Activated CD8-positive, alpha-beta memory T cell treated with anti-CD3 and anti-CD28 coated beads, Interleukin-2, amount 10 ng/mL, durations not matched to agents 7 days and 5 days (primary cell): ENCODE measurements at regions of chr12 and their contacts with region 1.

Region 1: DNA sequence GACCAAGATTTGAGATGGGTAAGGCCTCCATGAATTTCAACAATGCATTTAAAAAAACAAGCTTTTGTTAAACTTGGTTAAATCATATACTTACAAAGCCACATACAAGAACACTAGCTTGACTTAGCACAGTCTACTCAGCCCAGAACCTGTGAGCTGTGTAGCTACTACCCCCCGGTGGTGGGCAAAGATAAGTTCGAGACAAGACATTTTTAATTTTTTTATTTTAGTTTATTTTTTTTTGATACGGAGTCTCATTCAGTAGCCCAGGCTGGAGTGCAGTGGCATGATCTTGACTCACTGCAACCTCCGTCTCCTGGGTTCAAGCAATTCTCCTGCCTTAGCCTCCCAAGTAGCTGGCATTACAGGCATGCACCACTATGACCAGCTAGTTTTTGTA is 3.7 kb upstream of the NECAP1 start:
- DNase-seq: peak; percentile 71
- ATAC-seq: no peak
- H3K4me3 Mint-ChIP-seq: no peak overlapping the region
- H3K27ac Mint-ChIP-seq: no peak overlapping the region
- H3K4me1 Mint-ChIP-seq: peaks cover 32% of the 10 kb centered on the region
- H3K27me3 Mint-ChIP-seq: no peaks in the 10 kb centered on the region

Region 2: DNA sequence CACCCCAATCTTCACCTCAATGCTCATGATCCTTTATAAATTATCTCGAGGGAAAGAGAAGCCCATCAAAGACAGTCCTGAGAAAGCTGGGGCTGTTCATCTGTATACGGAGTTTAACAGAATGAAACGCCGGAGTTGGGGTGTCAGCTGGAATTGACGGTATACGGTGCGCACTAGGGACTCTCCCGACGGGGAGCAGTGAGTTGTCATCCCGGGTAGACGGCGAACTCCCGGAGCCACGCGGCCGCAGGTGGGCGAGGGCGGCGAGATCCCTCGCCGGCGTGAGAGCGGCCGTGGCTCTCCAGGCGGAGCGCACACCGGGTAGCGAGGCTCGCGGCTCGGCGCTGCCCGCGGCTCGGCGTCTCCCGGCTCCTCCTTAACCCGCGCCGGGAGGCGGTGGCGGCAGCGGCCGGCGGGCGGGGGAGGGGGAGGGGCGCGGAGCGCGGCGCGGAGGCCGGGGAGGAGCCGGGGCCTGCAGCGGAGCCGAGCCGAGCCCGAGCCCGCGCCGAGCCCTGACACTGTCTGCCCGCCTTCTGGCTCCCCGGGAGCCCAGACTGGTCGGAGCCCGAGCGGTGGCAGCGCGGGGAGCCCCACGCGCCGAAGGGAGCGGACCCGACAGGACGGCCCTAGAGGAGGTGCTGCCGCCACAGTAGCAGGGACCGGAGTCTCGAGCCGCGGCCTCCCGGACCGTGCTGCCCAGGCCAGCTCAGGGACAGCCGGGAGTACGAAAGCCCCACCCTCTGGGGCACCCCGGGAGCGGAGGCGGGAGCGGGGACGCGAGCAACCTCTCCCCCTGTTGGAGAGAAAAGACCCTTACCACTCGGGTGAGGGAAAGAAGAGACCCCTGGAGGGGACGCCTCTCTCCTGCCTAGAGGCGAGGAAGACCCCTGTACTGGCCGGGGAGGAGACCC is 45.9 kb before region 1 on chr12 and contains the start of gene FOXJ2:
- CTCF ChIA-PET with region 1: interaction called, 16 read pairs
- DNase-seq: peak; percentile 81
- ATAC-seq: peak; percentile 91
- H3K4me3 Mint-ChIP-seq: peak within 1 kb of the TSS; percentile 83
- H3K27ac Mint-ChIP-seq: peak within 1 kb of the TSS; percentile 79
- H3K4me1 Mint-ChIP-seq: peaks cover 52% of the 10 kb centered on the region
- H3K27me3 Mint-ChIP-seq: no peaks in the 10 kb centered on the region
- total RNA-seq, gene FOXJ2: 17.9 to 18.1 TPM

Region 3: GRCh38 chr12:8038659-8039114 is 39.7 kb before region 1 on chr12:
- CTCF ChIA-PET with region 1: interaction called, 69 read pairs
- DNase-seq: peak; percentile 55
- ATAC-seq: peak; percentile 63
- H3K4me3 Mint-ChIP-seq: peak overlapping the region; percentile 25
- H3K27ac Mint-ChIP-seq: no peak overlapping the region
- H3K4me1 Mint-ChIP-seq: peaks cover 55% of the 10 kb centered on the region
- H3K27me3 Mint-ChIP-seq: no peaks in the 10 kb centered on the region

Region 4: GRCh38 chr12:8045952-8046944 is 32.1 kb before region 1 on chr12:
- CTCF ChIA-PET with region 1: interaction called, 69 read pairs
- DNase-seq: peak; percentile 86
- ATAC-seq: peak; percentile 88
- H3K4me3 Mint-ChIP-seq: no peak overlapping the region
- H3K27ac Mint-ChIP-seq: no peak overlapping the region
- H3K4me1 Mint-ChIP-seq: peaks cover 12% of the 10 kb centered on the region
- H3K27me3 Mint-ChIP-seq: no peaks in the 10 kb centered on the region

Region 5: GRCh38 chr12:8057839-8058238 is 20.6 kb before region 1 on chr12:
- CTCF ChIA-PET with region 1: interaction called, 11 read pairs
- DNase-seq: no peak
- ATAC-seq: no peak
- H3K4me3 Mint-ChIP-seq: no peak overlapping the region
- H3K27ac Mint-ChIP-seq: no peak overlapping the region
- H3K4me1 Mint-ChIP-seq: peaks cover 8% of the 10 kb centered on the region
- H3K27me3 Mint-ChIP-seq: no peaks in the 10 kb centered on the region

Region 6: DNA sequence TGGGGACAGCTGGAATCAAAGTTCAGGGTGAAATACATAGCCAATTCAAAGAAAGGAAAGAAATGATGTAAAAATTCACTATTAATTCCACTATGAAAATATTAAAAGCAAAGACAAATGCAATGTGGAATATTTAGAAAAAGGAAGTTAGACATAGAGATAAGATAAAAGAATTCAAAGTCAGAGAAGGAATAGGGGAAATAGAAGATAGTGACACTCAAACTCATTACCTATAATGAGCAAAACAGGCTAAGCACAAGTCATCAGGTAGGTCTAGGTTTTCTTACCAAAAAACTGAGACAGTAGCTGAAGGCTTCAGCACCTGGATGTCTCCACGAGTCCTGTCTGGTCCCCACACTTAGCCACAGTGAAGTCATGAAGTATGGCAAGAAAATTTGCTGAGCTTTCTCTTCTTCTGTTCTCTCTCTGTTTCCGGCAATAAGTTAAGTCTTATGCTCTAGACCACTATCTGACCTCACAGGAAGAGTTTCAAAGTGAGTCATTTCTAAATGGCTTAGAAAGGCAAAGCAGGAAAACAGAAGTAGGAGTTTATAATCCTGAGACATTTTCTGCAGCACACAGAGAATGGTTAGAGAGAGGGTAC is 12.3 kb before region 1 on chr12 and contains the start of gene C3AR1:
- CTCF ChIA-PET with region 1: interaction called, 25 read pairs
- DNase-seq: peak; percentile 63
- ATAC-seq: peak; percentile 99
- H3K4me3 Mint-ChIP-seq: peak within 1 kb of the TSS; percentile 70
- H3K27ac Mint-ChIP-seq: peak within 1 kb of the TSS; percentile 84
- H3K4me1 Mint-ChIP-seq: peaks cover 47% of the 10 kb centered on the region
- H3K27me3 Mint-ChIP-seq: no peaks in the 10 kb centered on the region
- total RNA-seq, gene C3AR1: 9.3 to 10.7 TPM

Region 7: GRCh38 chr12:8120072-8120713 is 41.8 kb after region 1 on chr12:
- CTCF ChIA-PET with region 1: no interaction called
- DNase-seq: no peak
- ATAC-seq: no peak
- H3K4me3 Mint-ChIP-seq: no peak overlapping the region
- H3K27ac Mint-ChIP-seq: no peak overlapping the region
- H3K4me1 Mint-ChIP-seq: no peaks in the 10 kb centered on the region
- H3K27me3 Mint-ChIP-seq: no peaks in the 10 kb centered on the region